Activated CD4-positive, alpha-beta T cell treated with anti-CD3 and anti-CD28 coated beads for 36 hours (primary cell): ENCODE measurements at regions of chr3 and their contacts with region 1.

Region 1: GRCh38 chr3:12193485-12194165 is 34.9 kb upstream of the TIMP4 start:
- DNase-seq: peak; percentile 63
- ATAC-seq: peak; percentile 60
- H3K4me3 Mint-ChIP-seq: peak overlapping the region; percentile 32
- H3K27ac Mint-ChIP-seq: peak overlapping the region; percentile 87
- H3K4me1 Mint-ChIP-seq: peaks cover 62% of the 10 kb centered on the region
- H3K27me3 Mint-ChIP-seq: peaks cover 4% of the 10 kb centered on the region

Region 2: DNA sequence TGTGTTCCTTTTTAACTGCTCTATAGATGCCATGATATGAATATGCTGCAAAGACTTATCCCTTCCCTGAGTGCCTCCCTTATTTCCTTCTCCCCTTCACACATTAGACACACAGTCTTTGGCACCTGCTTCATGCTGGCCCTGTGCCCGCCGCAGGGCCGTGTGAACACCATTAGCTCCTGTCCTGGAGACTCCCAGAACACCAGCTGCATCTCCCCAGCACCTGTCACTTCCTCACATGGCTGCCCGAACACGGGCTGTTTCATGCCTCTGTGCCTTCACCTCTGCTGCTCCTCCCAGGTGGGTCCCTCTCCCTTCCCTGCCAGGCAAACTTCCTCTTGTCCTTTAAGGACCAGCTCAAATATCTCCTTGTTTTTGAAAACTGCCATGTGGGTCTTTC is 1832.2 kb before region 1 on chr3:
- CTCF ChIA-PET with region 1: no interaction called
- POLR2A ChIA-PET with region 1: no interaction called
- intact Hi-C with region 1: loop called in 1 of 2 experiments (anchors 5 kb)
- DNase-seq: no peak
- ATAC-seq: no peak
- H3K4me3 Mint-ChIP-seq: no peak overlapping the region
- H3K27ac Mint-ChIP-seq: no peak overlapping the region
- H3K4me1 Mint-ChIP-seq: peaks cover 36% of the 10 kb centered on the region
- H3K27me3 Mint-ChIP-seq: peaks cover 12% of the 10 kb centered on the region

Region 3: GRCh38 chr3:11236595-11237461 is 956.8 kb before region 1 on chr3:
- CTCF ChIA-PET with region 1: no interaction called
- POLR2A ChIA-PET with region 1: no interaction called
- intact Hi-C with region 1: loop called in 1 of 2 experiments (anchors 2 kb)
- DNase-seq: peak; percentile 90
- ATAC-seq: no peak
- H3K4me3 Mint-ChIP-seq: no peak overlapping the region
- H3K27ac Mint-ChIP-seq: no peak overlapping the region
- H3K4me1 Mint-ChIP-seq: peaks cover 46% of the 10 kb centered on the region
- H3K27me3 Mint-ChIP-seq: peaks cover 23% of the 10 kb centered on the region

Region 4: GRCh38 chr3:12175844-12176453 is 17.7 kb before region 1 on chr3:
- CTCF ChIA-PET with region 1: interaction called, 6 read pairs
- POLR2A ChIA-PET with region 1: interaction called, 3 read pairs
- intact Hi-C with region 1: loop called in 1 of 2 experiments (anchors 1 kb)
- DNase-seq: peak; percentile 69
- ATAC-seq: peak; percentile 18
- H3K4me3 Mint-ChIP-seq: no peak overlapping the region
- H3K27ac Mint-ChIP-seq: no peak overlapping the region
- H3K4me1 Mint-ChIP-seq: peaks cover 17% of the 10 kb centered on the region
- H3K27me3 Mint-ChIP-seq: peaks cover 5% of the 10 kb centered on the region

Region 5: DNA sequence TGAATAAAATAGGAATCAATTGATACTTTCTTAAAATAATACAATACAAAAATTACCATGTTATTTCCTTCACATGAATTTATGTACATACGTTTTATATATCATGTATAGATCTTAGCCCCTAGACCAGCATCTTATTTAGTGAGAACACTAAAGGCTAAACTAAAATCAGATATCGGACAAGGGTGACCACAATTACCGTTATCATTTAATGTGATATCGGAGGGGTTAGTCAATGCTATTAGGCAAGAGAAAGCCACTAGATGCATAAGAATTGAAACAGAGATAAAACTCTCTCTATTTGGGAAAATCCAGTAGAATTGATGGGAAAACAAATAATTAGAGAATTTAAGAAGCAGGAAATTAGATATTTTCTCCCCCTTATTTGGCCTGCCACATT is 11.5 kb after region 1 on chr3:
- CTCF ChIA-PET with region 1: no interaction called
- POLR2A ChIA-PET with region 1: no interaction called
- intact Hi-C with region 1: no loop called
- DNase-seq: no peak
- ATAC-seq: no peak
- H3K4me3 Mint-ChIP-seq: no peak overlapping the region
- H3K27ac Mint-ChIP-seq: no peak overlapping the region
- H3K4me1 Mint-ChIP-seq: no peaks in the 10 kb centered on the region
- H3K27me3 Mint-ChIP-seq: peaks cover 2% of the 10 kb centered on the region

Region 6: GRCh38 chr3:12239310-12239709 is 45.7 kb after region 1 on chr3:
- CTCF ChIA-PET with region 1: no interaction called
- POLR2A ChIA-PET with region 1: no interaction called
- intact Hi-C with region 1: no loop called
- DNase-seq: no peak
- ATAC-seq: no peak
- H3K4me3 Mint-ChIP-seq: no peak overlapping the region
- H3K27ac Mint-ChIP-seq: no peak overlapping the region
- H3K4me1 Mint-ChIP-seq: peaks cover 2% of the 10 kb centered on the region
- H3K27me3 Mint-ChIP-seq: peaks cover 20% of the 10 kb centered on the region

Region 7: GRCh38 chr3:12395349-12396012 is 201.9 kb after region 1 on chr3:
- CTCF ChIA-PET with region 1: interaction called, 4 read pairs
- POLR2A ChIA-PET with region 1: no interaction called
- intact Hi-C with region 1: loop called (anchors 1 kb)
- DNase-seq: peak; percentile 43
- ATAC-seq: peak; percentile 96
- H3K4me3 Mint-ChIP-seq: peak overlapping the region; percentile 23
- H3K27ac Mint-ChIP-seq: peak overlapping the region; percentile 34
- H3K4me1 Mint-ChIP-seq: peaks cover 24% of the 10 kb centered on the region
- H3K27me3 Mint-ChIP-seq: peaks cover 25% of the 10 kb centered on the region

Region 8: DNA sequence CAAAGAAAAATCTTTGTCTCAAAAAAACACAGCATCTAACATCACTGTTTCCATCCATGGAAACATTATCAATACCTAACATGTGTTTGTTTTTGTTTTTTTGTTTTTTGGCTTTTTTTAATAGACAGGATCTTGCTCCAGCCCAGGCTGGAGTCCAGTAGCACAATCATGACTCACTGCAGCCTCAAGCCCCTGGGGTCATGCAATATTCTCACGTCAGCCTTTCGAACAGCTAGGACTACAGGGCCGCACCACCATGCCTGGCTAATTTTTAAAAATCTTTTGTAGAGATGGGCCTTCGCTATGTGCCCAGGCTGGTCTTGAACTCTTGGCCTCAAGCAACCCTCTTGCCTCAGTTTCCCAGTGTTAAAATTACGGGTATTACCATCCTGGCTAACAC is 417.5 kb after region 1 on chr3:
- CTCF ChIA-PET with region 1: no interaction called
- POLR2A ChIA-PET with region 1: no interaction called
- intact Hi-C with region 1: loop called in 1 of 2 experiments (anchors 5 kb)
- DNase-seq: no peak
- ATAC-seq: no peak
- H3K4me3 Mint-ChIP-seq: no peak overlapping the region
- H3K27ac Mint-ChIP-seq: no peak overlapping the region
- H3K4me1 Mint-ChIP-seq: peaks cover 62% of the 10 kb centered on the region
- H3K27me3 Mint-ChIP-seq: no peaks in the 10 kb centered on the region